ENCODE measurements at regions of chr7 and their contacts with region 1.

Region 1: DNA sequence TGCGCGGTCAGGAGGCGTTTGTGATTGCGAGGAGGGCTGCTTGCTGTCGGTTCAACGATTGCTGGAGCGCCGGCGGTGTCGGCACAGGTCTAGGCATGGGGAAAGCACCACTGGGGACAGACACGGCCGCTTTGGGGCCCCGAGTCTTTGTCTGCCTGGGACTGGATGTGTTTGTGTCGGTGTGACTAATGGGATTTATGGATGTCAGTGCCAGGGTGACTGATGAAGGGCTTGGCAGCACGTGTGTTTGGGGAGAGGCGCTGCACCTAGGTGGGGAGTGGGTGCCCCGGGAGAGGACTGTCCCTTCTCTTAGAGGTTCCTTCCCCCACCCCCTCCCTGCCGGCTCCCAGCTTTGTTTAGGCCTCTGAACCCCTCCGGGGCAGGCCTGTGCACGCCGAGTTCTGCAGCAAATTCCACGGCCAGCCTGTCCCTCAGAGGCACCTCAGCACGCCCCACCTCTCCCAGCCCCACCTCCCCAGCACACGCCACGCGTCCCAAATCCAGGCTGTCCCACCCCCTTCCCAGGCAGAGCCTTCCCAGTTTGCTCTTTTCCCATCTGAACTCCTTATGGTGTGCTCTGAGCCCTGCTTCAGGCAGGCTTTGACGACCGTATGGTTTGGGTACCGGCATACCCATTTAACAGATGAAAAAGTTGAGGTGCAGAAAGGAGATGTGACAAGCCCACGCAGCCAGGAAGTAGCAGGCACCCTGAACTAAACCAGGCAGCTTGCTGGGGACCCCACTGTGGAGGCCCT is 6.4 kb upstream of the TNRC18 start:
- DNase-seq: peak; percentile 83
- H3K4me3 ChIP-seq: peak overlapping the region; percentile 70 to 91 (median 81)
- H3K27ac ChIP-seq: peak overlapping the region; percentile 94
- H3K4me1 ChIP-seq: peaks cover 11% of the 10 kb centered on the region
- H3K27me3 ChIP-seq: no peaks in the 10 kb centered on the region
- CTCF ChIP-seq: no peak

Region 2: GRCh38 chr7:5382281-5382892 is 47.6 kb before region 1 on chr7:
- CTCF ChIA-PET with region 1: no interaction called
- dilution Hi-C with region 1: loop called (anchors 5 kb)
- in situ Hi-C with region 1: no loop called
- intact Hi-C with region 1: no loop called
- DNase-seq: no peak
- H3K4me3 ChIP-seq: no peak overlapping the region
- H3K27ac ChIP-seq: no peak overlapping the region
- H3K4me1 ChIP-seq: no peaks in the 10 kb centered on the region
- H3K27me3 ChIP-seq: no peaks in the 10 kb centered on the region
- CTCF ChIP-seq: no peak

Region 3: GRCh38 chr7:5596046-5596895 is 166.2 kb after region 1 on chr7:
- CTCF ChIA-PET with region 1: no interaction called
- dilution Hi-C with region 1: no loop called
- in situ Hi-C with region 1: no loop called
- intact Hi-C with region 1: no loop called
- DNase-seq: peak; percentile 90
- H3K4me3 ChIP-seq: peak overlapping the region; percentile 68 to 90 (median 88)
- H3K27ac ChIP-seq: peak overlapping the region; percentile 58
- H3K4me1 ChIP-seq: peaks cover 46% of the 10 kb centered on the region
- H3K27me3 ChIP-seq: no peaks in the 10 kb centered on the region
- CTCF ChIP-seq: no peak